ENCODE measurements at regions of chr1 and their contacts with region 1.

Region 1: GRCh38 chr1:84122780-84123382 is 21.2 kb upstream of the PRKACB start:
- DNase-seq: peak; percentile 79
- ATAC-seq: peak; percentile 65
- H3K4me3 ChIP-seq: no peak overlapping the region
- H3K27ac ChIP-seq: no peak overlapping the region
- H3K4me1 ChIP-seq: no peaks in the 10 kb centered on the region
- H3K27me3 ChIP-seq: no peaks in the 10 kb centered on the region
- CTCF ChIP-seq: peak; percentile 90

Region 2: DNA sequence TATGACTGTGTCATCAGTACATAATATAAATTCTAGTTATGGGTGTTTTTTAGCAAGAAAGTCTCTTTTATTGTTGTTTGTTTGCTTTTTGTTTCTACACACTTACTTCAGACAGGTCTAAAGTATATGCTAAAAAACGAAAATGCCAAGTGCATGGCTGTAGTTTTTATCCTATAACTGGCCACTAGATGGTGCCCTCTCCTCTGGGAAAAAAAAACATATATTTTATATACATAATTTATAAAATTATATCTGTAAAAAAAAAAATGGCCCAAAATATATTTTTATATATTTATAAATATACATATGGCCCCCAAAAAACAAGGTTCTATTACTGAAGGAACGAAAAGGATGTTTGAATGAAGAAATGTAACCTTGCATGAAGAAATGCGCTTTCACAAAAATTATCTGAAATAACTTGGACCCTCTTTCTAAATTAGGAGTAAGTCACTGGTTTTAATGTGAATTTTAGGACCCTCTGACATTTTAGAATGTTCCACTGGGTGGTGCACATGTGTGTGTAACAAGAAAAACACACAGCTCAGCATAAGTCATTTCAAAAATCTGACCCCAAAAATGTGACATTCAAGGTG is 217.5 kb before region 1 on chr1:
- CTCF ChIA-PET with region 1: no interaction called
- POLR2A ChIA-PET with region 1: no interaction called
- intact Hi-C with region 1: loop called (anchors 1 kb)
- DNase-seq: peak; percentile 51
- ATAC-seq: no peak
- H3K4me3 ChIP-seq: no peak overlapping the region
- H3K27ac ChIP-seq: no peak overlapping the region
- H3K4me1 ChIP-seq: peaks cover 21% of the 10 kb centered on the region
- H3K27me3 ChIP-seq: no peaks in the 10 kb centered on the region
- CTCF ChIP-seq: peak; percentile 45

Region 3: GRCh38 chr1:83931658-83932253 is 191.1 kb before region 1 on chr1:
- CTCF ChIA-PET with region 1: no interaction called
- POLR2A ChIA-PET with region 1: no interaction called
- intact Hi-C with region 1: loop called (anchors 1 kb)
- DNase-seq: peak; percentile 67
- ATAC-seq: peak; percentile 73
- H3K4me3 ChIP-seq: no peak overlapping the region
- H3K27ac ChIP-seq: no peak overlapping the region
- H3K4me1 ChIP-seq: no peaks in the 10 kb centered on the region
- H3K27me3 ChIP-seq: no peaks in the 10 kb centered on the region
- CTCF ChIP-seq: peak; percentile 87

Region 4: DNA sequence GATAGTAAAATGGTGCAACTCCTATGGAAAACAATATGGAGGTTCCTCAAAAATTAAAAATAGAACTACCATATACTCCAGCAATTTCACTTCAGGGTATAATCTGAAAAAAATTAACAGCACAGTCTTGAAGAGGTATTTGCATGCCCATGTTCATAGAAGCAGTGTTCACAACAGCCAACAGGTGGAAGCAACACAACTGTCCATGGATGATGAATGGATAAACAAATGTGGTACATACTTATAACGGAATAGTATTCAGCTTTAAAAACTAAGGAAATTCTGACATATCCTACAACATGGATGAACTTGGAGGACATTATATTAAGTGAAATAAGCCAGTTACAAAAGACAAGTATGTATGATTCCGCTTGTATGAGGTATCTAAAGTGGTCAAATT is 132.1 kb before region 1 on chr1:
- CTCF ChIA-PET with region 1: no interaction called
- POLR2A ChIA-PET with region 1: no interaction called
- intact Hi-C with region 1: loop called (anchors 1 kb)
- DNase-seq: peak; percentile 34
- ATAC-seq: 0 out of 2 replicates have a peak, but pooled peaks have one; percentile 35
- H3K4me3 ChIP-seq: no peak overlapping the region
- H3K27ac ChIP-seq: no peak overlapping the region
- H3K4me1 ChIP-seq: no peaks in the 10 kb centered on the region
- H3K27me3 ChIP-seq: no peaks in the 10 kb centered on the region
- CTCF ChIP-seq: peak; percentile 54; the same call in 1 of the 2 replicates

Region 5: DNA sequence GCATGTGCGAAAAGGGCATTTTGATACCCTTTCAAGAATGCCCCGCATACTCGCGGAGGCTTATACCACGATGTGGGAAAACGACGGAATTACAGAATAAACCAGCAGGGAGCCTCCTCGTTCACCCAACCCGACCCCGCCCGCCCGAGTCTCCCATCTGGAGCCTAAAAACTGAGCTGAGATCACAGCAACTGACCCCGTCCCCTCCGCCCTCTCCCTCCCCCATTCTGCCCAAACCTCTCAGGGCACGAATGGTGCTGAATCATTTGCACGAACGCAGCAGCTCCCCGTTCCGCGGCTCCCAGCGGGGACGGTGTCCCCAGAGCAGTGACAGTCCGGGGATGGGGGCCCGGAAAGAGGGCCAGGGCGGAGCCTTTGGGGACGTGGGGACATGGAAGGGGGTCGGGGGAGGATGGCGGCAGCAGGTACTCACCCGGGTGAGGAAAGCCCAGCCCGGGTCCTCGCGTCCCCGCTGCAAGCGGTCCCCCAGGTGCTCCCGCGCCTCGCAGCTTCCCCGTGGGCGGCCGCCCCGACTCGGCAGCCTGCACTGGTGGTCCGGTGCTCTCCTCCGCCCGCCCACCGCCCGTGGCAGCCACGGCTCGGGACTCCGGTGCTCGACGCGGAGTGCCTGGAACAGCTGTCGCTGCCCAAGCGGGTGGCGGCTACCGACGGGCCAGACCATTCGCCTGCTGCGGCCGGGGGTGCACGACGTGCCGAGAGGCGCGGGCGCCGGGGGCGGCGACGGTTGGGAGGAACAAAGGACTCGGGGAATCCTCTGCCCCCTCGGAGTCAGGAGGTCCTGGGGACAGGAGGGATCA is 124.2 kb before region 1 on chr1 and contains the start of gene TTLL7:
- CTCF ChIA-PET with region 1: interaction called, 3 read pairs
- POLR2A ChIA-PET with region 1: no interaction called
- intact Hi-C with region 1: loop called (anchors 2 kb)
- DNase-seq: peak; percentile 65
- ATAC-seq: peak; percentile 85
- H3K4me3 ChIP-seq: peak within 1 kb of the TSS; percentile 91
- H3K27ac ChIP-seq: peak within 1 kb of the TSS; percentile 66
- H3K4me1 ChIP-seq: peaks cover 16% of the 10 kb centered on the region
- H3K27me3 ChIP-seq: no peaks in the 10 kb centered on the region
- CTCF ChIP-seq: no peak
- total RNA-seq, gene TTLL7: 3.8 and 6.8 TPM in 2 replicates

Region 6: GRCh38 chr1:84077476-84078107 is 45.3 kb before region 1 on chr1:
- CTCF ChIA-PET with region 1: no interaction called
- POLR2A ChIA-PET with region 1: no interaction called
- intact Hi-C with region 1: loop called (anchors 2 kb)
- DNase-seq: peak; percentile 69
- ATAC-seq: peak; percentile 88
- H3K4me3 ChIP-seq: peak overlapping the region; percentile 87
- H3K27ac ChIP-seq: peak overlapping the region; percentile 12; the same call in 1 of the 2 replicates
- H3K4me1 ChIP-seq: peaks cover 11% of the 10 kb centered on the region; the same call in 1 of the 2 replicates
- H3K27me3 ChIP-seq: no peaks in the 10 kb centered on the region
- CTCF ChIP-seq: no peak

Measured in PC-3 (cell line).